Head of caudate nucleus (tissue), 42 donors: ENCODE measurements at regions of chr10 and their contacts with region 1.

Region 1: GRCh38 chr10:92573798-92574547 is at the start of gene IDE:
- DNase-seq: peak; percentile 65 to 93 (median 85)

Region 2: DNA sequence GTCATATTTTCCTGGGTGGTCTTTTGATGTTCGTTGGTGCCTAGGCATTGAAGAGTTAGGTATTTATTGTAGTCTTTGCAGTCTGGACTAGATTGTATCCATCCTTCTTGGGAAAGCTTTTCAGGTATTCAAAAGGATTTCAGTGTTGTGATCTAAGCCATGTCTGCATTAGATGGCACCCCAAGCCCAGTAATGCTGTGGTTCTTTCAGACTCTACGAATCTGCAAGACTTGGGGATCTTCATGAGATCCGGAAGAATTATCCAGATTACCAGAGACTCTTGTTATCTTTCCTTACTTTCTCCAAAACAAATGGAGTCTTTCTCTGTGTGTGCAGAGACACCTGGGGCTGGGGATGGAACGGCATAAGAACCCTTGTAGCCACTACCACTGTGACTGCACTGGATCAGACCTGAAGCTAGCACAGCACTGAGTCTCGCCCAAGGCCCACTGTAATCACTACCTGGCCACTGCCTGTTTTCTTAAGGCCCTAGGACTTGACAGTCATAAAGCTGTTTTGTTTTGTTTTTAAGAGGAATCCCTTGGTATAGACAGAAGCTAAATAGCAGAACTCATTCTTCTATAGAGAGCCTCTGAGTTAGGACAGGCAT is 207.5 kb before region 1 on chr10:
- intact Hi-C with region 1: no loop called
- DNase-seq: no peak

Region 3: DNA sequence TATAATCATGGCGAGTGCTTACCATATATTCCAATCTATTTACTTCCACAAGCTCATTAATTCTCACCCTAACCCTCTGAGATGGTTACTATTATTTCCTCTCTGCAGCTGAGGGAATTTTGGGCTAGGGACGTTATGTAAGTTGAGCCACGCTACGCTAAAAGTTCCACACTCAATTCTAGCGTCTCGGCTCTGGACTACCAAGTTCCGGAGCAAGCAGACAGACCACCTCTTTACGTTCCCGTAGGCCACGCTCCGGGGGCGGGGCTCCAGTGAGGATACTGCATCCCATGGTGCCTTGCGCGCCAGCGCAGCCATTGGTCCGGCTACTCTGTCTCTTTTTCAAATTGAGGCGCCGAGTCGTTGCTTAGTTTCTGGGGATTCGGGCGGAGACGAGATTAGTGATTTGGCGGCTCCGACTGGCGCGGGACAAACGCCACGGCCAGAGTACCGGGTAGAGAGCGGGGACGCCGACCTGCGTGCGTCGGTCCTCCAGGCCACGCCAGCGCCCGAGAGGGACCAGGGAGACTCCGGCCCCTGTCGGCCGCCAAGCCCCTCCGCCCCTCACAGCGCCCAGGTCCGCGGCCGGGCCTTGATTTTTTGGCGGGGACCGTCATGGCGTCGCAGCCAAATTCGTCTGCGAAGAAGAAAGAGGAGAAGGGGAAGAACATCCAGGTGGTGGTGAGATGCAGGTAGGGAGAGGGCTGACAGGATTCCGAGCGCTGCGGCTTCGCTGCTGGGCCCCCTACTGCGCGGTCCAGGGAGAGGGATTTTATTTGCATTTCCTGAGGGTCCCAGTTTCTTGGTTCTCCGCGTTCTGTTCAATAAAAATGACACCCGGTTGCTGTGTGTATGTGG is 19.0 kb after region 1 on chr10 and contains the start of gene KIF11:
- intact Hi-C with region 1: loop called (anchors 2 kb)
- DNase-seq: peak; percentile 95 to 100 (median 98)